ENCODE measurements at regions of chr2 and their contacts with region 1.

Region 1: GRCh38 chr2:169625781-169626180 is 41.6 kb downstream of the PPIG start:
- DNase-seq: no peak
- H3K4me3 ChIP-seq: no peak overlapping the region
- H3K27me3 ChIP-seq: no peaks in the 10 kb centered on the region
- CTCF ChIP-seq: no peak

Region 2: DNA sequence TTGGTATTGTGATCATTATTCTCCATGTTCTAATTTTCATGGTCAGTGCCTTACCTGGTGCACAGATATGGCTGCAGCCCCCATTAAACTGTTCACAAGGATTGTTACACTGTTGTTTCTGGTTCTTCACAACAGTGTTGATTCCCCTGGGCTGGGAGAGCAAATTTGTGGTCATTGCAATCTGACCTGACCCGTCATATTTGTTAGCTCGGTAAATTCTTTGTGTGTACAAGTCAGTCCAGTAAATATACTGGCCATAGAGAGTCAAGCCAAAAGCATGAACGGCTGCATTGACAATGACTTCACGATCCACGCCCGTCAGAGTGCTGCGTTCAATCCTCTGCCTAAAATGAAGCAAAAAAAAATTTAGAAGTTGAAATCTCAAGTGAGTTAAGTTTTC is 421.9 kb before region 1 on chr2:
- CTCF ChIA-PET with region 1: no interaction called
- POLR2A ChIA-PET with region 1: no interaction called
- DNase-seq: no peak
- H3K4me3 ChIP-seq: no peak overlapping the region
- H3K27me3 ChIP-seq: no peaks in the 10 kb centered on the region
- CTCF ChIP-seq: no peak

Region 3: DNA sequence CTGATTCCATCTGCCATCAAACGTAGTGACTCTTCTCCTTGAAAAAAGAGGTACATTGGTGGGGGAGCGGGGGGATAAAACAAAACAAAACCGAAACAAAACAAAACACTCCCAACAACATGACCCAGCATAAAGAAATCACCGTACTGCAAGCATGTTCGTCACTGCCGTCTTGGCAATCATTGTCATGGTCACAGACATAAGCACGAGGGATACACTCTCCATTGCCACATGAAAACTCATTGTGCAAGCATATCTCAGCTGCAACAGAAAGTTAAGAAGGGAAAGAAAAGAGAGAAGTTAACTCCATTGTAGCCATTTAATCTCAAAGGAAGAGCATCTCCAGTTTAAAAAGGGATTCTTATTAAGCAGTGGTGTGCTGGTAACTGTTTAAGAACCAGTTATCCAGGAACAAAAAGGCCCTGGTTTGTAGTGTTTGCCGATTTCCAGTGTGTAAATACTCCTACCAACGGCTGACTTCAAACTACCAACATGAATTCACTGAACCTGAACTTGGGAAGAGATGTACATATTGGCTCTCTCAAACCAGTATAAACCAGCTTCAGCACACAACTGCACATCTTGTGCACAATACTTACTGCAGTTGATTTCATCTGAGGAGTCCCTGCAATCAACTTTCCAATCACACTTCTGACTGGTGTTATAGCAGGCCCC is 331.6 kb before region 1 on chr2:
- CTCF ChIA-PET with region 1: no interaction called
- POLR2A ChIA-PET with region 1: no interaction called
- DNase-seq: no peak
- H3K4me3 ChIP-seq: no peak overlapping the region
- H3K27me3 ChIP-seq: no peaks in the 10 kb centered on the region
- CTCF ChIP-seq: no peak

Region 4: DNA sequence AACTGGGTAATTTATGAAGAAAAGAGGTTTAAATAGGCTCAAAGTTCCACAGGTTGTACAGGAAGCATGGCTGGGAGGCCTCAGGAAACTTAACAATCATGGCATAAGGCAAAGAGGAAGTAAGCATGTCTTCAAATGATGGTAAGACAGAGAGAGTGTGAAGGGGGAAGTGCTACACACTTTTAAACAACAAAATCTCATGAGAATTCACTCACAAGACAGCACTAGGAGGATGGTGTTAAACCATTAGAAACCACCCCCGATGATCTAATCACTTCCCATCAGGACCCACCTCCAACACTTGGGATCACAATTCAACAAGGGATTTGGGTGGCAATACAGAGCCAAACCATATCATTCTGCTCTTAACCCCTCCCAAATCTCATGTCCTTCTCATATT is 33.5 kb after region 1 on chr2:
- CTCF ChIA-PET with region 1: no interaction called
- POLR2A ChIA-PET with region 1: no interaction called
- DNase-seq: no peak
- H3K4me3 ChIP-seq: no peak overlapping the region
- H3K27me3 ChIP-seq: peaks cover 1% of the 10 kb centered on the region; the same call in 1 of the 2 replicates
- CTCF ChIP-seq: no peak

Region 5: GRCh38 chr2:169849720-169850119 is 223.9 kb after region 1 on chr2:
- CTCF ChIA-PET with region 1: no interaction called
- POLR2A ChIA-PET with region 1: interaction called, 10 read pairs
- DNase-seq: no peak
- H3K4me3 ChIP-seq: no peak overlapping the region
- H3K27me3 ChIP-seq: no peaks in the 10 kb centered on the region
- CTCF ChIP-seq: no peak